ENCODE measurements at regions of chr3 and their contacts with region 1.

Region 1: DNA sequence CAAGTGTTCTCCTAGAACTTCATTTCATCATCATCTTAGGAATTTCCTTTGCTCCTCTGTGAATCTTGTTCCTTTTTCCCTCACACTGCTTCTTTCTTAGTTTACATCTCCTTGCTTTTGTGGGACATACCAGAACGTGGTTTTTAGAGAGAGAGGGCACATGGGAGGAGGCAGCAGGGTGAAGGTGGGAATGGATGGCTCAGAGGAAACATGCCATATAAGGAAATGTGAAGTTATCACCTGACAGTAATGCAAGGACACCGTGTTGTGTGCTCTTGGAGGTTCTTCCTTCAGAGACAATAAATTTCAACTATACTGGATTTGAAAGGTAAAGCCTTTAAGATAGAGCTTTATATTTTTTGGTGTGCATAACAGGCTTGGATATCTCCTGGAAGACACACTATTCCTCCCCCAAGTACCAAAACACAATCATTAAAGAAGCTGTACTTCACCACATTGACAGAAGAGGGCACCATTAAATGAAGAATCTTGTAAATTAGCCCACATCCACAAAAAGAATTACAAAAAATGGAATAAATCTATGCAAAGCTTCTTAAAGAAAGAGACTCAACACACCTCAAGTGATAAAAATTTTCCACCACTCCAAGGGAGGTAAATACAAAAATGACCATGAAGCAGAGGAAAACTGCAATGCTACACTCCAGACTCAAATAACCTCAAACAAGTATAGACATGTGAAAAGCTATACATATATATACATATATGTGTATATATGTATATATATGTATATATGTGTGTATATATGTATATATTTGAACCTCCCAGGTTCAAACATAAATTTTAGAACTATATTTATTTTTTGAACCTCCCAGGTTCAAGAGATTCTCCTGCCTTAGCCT is 26.1 kb downstream of the RPL39L start:
- DNase-seq: peak in 4 of 5 donors; percentile 45 to 54 (median 52)
- H3K4me3 ChIP-seq: no peak overlapping the region
- H3K4me3 Mint-ChIP-seq: no peak overlapping the region
- H3K27ac ChIP-seq: no peak overlapping the region
- H3K27ac Mint-ChIP-seq: no peak overlapping the region
- H3K4me1 ChIP-seq: peaks cover 4% of the 10 kb centered on the region
- H3K4me1 Mint-ChIP-seq: peaks cover 5 to 7% (median 6%) of the 10 kb centered on the region in 4 donors
- H3K27me3 ChIP-seq: no peaks in the 10 kb centered on the region
- H3K27me3 Mint-ChIP-seq: no peaks in the 10 kb centered on the region

Region 2: DNA sequence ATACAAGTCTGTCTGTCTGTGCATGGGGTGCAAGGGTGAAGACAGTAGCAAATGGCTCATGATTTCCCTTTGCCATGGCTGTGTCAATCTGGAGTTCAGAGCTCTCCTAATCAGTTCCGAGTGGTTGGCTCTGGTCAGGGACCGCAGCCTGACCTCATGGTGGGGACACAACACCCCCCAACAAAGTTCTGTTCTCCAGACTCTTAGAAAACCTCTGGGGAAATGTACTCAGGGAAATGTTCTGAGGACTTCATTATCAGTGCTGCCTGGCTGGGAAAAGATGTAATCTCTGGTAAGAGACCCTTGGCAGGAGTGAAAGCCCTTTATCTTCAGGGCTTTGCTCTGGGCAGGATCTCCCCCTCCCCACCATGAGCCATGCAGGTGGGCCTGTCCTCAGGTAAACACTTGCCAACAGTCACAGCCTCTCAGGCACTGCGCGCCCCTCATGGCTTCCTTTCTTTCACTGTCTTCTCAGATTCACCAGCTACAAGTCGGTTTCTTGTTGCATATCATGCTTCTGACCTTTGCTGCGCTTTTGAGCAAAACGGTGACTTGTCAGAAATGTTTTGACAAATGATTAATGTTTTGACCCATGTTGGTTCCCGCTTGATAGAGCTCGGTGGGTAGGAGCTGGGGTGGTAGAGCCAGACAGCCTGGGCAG is 87.4 kb before region 1 on chr3:
- CTCF ChIA-PET with region 1: interaction called, 19 read pairs
- POLR2A ChIA-PET with region 1: interaction called, 5 read pairs
- intact Hi-C with region 1: no loop called
- DNase-seq: peak in 3 of 5 donors; percentile 18 to 49 (median 35)
- H3K4me3 ChIP-seq: peak overlapping the region; percentile 57 to 89
- H3K4me3 Mint-ChIP-seq: peak overlapping the region; percentile 81 to 97 (median 92)
- H3K27ac ChIP-seq: peak overlapping the region; percentile 68
- H3K27ac Mint-ChIP-seq: peak overlapping the region; percentile 86 to 98 (median 92)
- H3K4me1 ChIP-seq: peaks cover 82% of the 10 kb centered on the region
- H3K4me1 Mint-ChIP-seq: peaks cover 48 to 80% (median 62%) of the 10 kb centered on the region in 4 donors
- H3K27me3 ChIP-seq: no peaks in the 10 kb centered on the region
- H3K27me3 Mint-ChIP-seq: no peaks in the 10 kb centered on the region

Region 3: GRCh38 chr3:187125319-187126031 is 12.3 kb after region 1 on chr3:
- CTCF ChIA-PET with region 1: interaction called, 19 read pairs
- POLR2A ChIA-PET with region 1: interaction called, 6 read pairs
- intact Hi-C with region 1: no loop called
- DNase-seq: no peak
- H3K4me3 ChIP-seq: no peak overlapping the region
- H3K4me3 Mint-ChIP-seq: no peak overlapping the region
- H3K27ac ChIP-seq: no peak overlapping the region
- H3K27ac Mint-ChIP-seq: no peak overlapping the region
- H3K4me1 ChIP-seq: peaks cover 11% of the 10 kb centered on the region
- H3K4me1 Mint-ChIP-seq: peaks cover 10 to 21% (median 16%) of the 10 kb centered on the region in 4 donors
- H3K27me3 ChIP-seq: no peaks in the 10 kb centered on the region
- H3K27me3 Mint-ChIP-seq: no peaks in the 10 kb centered on the region

Region 4: DNA sequence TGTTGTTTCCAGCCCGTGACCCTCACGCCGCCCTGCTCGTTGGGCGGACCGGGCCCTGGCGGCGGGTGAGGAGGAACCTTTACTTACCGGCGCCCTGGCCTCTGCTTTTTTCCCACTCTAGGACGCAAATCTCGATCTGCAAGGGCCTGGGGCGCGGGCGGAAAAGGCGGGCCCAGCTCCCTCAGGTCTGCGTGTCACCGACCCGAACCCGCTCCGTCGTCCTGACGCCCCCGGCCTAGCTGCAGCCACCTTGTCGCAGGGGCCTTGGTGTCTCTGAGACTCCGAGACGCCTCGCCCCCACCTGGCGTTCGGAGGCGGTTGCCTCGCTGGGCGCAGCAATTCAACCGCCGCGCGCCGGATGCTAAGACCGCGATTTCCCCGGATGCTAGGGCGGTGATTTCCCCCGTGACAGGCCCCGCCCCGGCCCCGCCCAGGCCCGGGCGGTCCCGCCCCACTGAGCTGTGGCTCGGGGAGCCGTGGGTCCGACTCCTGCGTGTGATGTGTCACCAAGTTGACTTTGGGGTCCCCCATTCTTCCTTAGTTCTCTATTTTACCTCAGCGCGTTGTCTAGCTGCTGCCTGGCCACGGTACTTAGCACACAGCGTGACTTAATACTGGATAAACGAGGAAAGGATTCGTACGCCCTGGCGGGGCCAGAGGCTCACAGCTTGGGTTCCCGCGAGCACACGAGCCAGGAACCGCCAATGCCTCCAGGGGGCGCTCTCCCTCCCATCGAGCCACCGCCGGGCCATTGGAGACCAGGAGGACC is 26.1 kb after region 1 on chr3 and contains the start of gene RPL39L:
- CTCF ChIA-PET with region 1: interaction called, 94 read pairs
- POLR2A ChIA-PET with region 1: interaction called, 31 read pairs
- intact Hi-C with region 1: loop called (anchors 1 kb)
- DNase-seq: peak; percentile 91 to 93 (median 92)
- H3K4me3 ChIP-seq: peak within 1 kb of the TSS; percentile 24 to 86
- H3K4me3 Mint-ChIP-seq: peak within 1 kb of the TSS; percentile 82 to 94 (median 91)
- H3K27ac ChIP-seq: peak within 1 kb of the TSS; percentile 74
- H3K27ac Mint-ChIP-seq: peak within 1 kb of the TSS; percentile 87 to 97 (median 95)
- H3K4me1 ChIP-seq: peaks cover 17% of the 10 kb centered on the region
- H3K4me1 Mint-ChIP-seq: peaks cover 9 to 34% (median 18%) of the 10 kb centered on the region in 4 donors
- H3K27me3 ChIP-seq: no peaks in the 10 kb centered on the region
- H3K27me3 Mint-ChIP-seq: no peaks in the 10 kb centered on the region
- total RNA-seq, gene RPL39L: 2.6 to 3.6 TPM

Region 5: DNA sequence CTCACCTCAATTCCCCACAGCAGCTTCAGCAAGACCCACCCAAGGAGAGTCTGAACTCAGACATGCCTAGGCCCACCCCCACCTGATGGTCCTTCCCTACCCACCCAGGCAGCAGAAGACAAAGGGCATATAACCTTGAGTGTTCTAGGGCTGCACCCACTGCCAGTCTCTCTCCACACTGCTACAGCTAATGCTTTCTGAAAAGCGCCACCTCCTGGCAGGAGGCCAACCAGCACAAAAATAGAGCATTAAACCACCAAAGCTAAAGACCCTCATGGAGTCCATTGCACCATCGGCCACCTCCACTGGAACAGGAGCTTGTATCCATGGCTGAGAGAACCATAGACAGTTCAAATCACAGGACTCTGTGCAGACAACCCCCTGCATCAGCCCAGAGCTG is 37.4 kb after region 1 on chr3:
- CTCF ChIA-PET with region 1: interaction called, 235 read pairs
- POLR2A ChIA-PET with region 1: interaction called, 28 read pairs
- intact Hi-C with region 1: loop called (anchors 1 kb)
- DNase-seq: peak; percentile 47 to 61 (median 55)
- H3K4me3 ChIP-seq: no peak overlapping the region
- H3K4me3 Mint-ChIP-seq: no peak overlapping the region
- H3K27ac ChIP-seq: no peak overlapping the region
- H3K27ac Mint-ChIP-seq: no peak overlapping the region
- H3K4me1 ChIP-seq: no peaks in the 10 kb centered on the region
- H3K4me1 Mint-ChIP-seq: peaks cover 0 to 6% (median under 1%) of the 10 kb centered on the region in 4 donors
- H3K27me3 ChIP-seq: no peaks in the 10 kb centered on the region
- H3K27me3 Mint-ChIP-seq: peaks cover 6 to 13% of the 10 kb centered on the region in 2 donors

Region 6: GRCh38 chr3:187223799-187224198 is 110.6 kb after region 1 on chr3:
- CTCF ChIA-PET with region 1: no interaction called
- POLR2A ChIA-PET with region 1: no interaction called
- intact Hi-C with region 1: loop called (anchors 1 kb)
- DNase-seq: no peak
- H3K4me3 ChIP-seq: no peak overlapping the region
- H3K4me3 Mint-ChIP-seq: no peak overlapping the region
- H3K27ac ChIP-seq: no peak overlapping the region
- H3K27ac Mint-ChIP-seq: no peak overlapping the region
- H3K4me1 ChIP-seq: no peaks in the 10 kb centered on the region
- H3K4me1 Mint-ChIP-seq: no peaks in the 10 kb centered on the region
- H3K27me3 ChIP-seq: peaks cover 3% of the 10 kb centered on the region
- H3K27me3 Mint-ChIP-seq: peaks cover 8 to 13% of the 10 kb centered on the region in 2 donors

Region 7: DNA sequence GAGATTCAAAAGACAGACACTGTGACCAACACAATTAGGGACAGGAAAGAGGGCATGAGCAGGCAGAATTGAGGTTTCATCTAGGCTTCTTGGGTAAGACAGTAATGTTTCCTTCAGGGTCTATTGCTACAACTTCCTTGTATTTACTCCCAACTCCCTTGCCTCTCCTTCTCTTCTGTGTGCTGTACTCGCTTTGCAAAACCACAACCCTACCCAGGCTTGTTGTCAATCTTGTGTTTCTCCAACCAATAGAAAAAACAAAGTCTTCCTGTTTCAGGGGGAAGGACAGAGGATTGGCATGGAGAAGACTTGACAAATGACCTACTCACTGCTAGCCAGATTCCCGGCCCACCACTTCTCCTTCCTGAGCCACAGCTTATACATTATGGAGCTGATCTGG is 214.7 kb after region 1 on chr3:
- CTCF ChIA-PET with region 1: no interaction called
- POLR2A ChIA-PET with region 1: no interaction called
- intact Hi-C with region 1: no loop called
- DNase-seq: no peak
- H3K4me3 ChIP-seq: no peak overlapping the region
- H3K4me3 Mint-ChIP-seq: no peak overlapping the region
- H3K27ac ChIP-seq: no peak overlapping the region
- H3K27ac Mint-ChIP-seq: no peak overlapping the region
- H3K4me1 ChIP-seq: no peaks in the 10 kb centered on the region
- H3K4me1 Mint-ChIP-seq: no peaks in the 10 kb centered on the region
- H3K27me3 ChIP-seq: no peaks in the 10 kb centered on the region
- H3K27me3 Mint-ChIP-seq: peaks cover 1 to 2% of the 10 kb centered on the region in 2 donors

Measured in CD4-positive, alpha-beta memory T cell (primary cell).